Esophagus muscularis mucosa (tissue), 4 donors: ENCODE measurements at regions of chr1 and their contacts with region 1.

Region 1: GRCh38 chr1:202348509-202349205 is at the start of gene PPP1R12B:
- DNase-seq: peak; percentile 99
- H3K4me3 ChIP-seq: peak within 1 kb of the TSS; percentile 83 to 98 (median 93)
- H3K27ac ChIP-seq: peak within 1 kb of the TSS; percentile 89 to 93 (median 92)
- H3K4me1 ChIP-seq: peaks cover 18 to 40% (median 36%) of the 10 kb centered on the region in 4 donors
- H3K27me3 ChIP-seq: no peaks in the 10 kb centered on the region
- CTCF ChIP-seq: no peak
- EP300 ChIP-seq: no peak
- POLR2A ChIP-seq: peak; percentile 18
- total RNA-seq, gene PPP1R12B: 692 to 1,262 (median 949) TPM

Region 2: GRCh38 chr1:202367271-202367670 is 18.6 kb after region 1 on chr1:
- intact Hi-C with region 1: loop called (anchors 2 kb)
- DNase-seq: no peak
- H3K4me3 ChIP-seq: no peak overlapping the region
- H3K27ac ChIP-seq: no peak overlapping the region
- H3K4me1 ChIP-seq: peaks cover 3 to 20% (median 17%) of the 10 kb centered on the region in 4 donors
- H3K27me3 ChIP-seq: no peaks in the 10 kb centered on the region
- CTCF ChIP-seq: no peak
- EP300 ChIP-seq: no peak
- POLR2A ChIP-seq: no peak

Region 3: GRCh38 chr1:202416641-202417040 is 68.0 kb after region 1 on chr1:
- intact Hi-C with region 1: loop called (anchors 10 kb)
- DNase-seq: no peak
- H3K4me3 ChIP-seq: no peak overlapping the region
- H3K27ac ChIP-seq: no peak overlapping the region
- H3K4me1 ChIP-seq: peaks cover 18 to 26% (median 23%) of the 10 kb centered on the region in 4 donors
- H3K27me3 ChIP-seq: no peaks in the 10 kb centered on the region
- CTCF ChIP-seq: no peak
- EP300 ChIP-seq: no peak
- POLR2A ChIP-seq: no peak

Region 4: DNA sequence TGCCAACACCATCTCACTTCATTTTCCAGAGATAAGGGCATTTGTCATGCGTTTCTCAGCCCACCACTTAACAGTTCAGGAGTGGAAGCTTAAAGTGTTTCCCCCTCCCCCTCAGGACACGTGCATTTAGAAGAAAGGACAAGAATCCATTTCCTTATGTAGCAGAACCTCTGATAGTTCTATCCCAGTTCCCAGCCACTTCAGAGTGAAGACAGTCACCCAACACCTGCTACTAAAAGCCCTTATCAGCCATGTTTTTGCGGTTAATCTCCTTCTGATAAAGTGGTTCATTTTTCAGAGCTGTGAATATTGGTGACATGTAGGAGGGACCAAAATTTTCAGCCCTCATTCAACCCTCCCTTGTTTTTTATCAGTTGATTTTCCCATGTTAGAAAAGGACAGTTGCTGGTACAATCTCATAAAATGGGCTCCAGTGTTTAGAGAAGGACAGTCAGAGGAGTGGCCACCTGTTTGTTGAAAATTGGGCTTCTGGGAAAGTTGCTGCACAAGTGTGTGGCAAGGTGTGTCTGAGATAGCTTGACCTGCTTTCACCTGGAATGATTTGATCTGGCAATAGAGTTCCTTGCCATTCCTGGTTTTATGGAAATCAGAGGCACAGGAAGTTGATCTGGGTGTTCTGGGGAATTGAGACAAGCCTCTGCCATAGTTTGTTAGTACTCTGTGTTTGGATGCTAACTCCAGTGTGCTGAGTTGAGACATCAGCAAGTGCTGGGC is 113.9 kb after region 1 on chr1:
- intact Hi-C with region 1: loop called (anchors 10 kb)
- DNase-seq: no peak
- H3K4me3 ChIP-seq: no peak overlapping the region
- H3K27ac ChIP-seq: peak overlapping the region in 1 of 4 donors; percentile 21
- H3K4me1 ChIP-seq: peaks cover 15 to 62% (median 46%) of the 10 kb centered on the region in 4 donors
- H3K27me3 ChIP-seq: no peaks in the 10 kb centered on the region
- CTCF ChIP-seq: no peak
- EP300 ChIP-seq: no peak
- POLR2A ChIP-seq: no peak

Region 5: GRCh38 chr1:202625416-202626360 is 277.0 kb after region 1 on chr1:
- intact Hi-C with region 1: loop called (anchors 10 kb)
- DNase-seq: no peak
- H3K4me3 ChIP-seq: no peak overlapping the region
- H3K27ac ChIP-seq: no peak overlapping the region
- H3K4me1 ChIP-seq: peaks cover 18 to 25% (median 21%) of the 10 kb centered on the region in 4 donors
- H3K27me3 ChIP-seq: peaks cover 0 to 21% (median 0%) of the 10 kb centered on the region in 4 donors
- CTCF ChIP-seq: peak; percentile 64 to 85 (median 75)
- EP300 ChIP-seq: no peak
- POLR2A ChIP-seq: no peak

Region 6: GRCh38 chr1:202713110-202713509 is 364.5 kb after region 1 on chr1:
- intact Hi-C with region 1: loop called (anchors 5 kb)
- DNase-seq: no peak
- H3K4me3 ChIP-seq: no peak overlapping the region
- H3K27ac ChIP-seq: no peak overlapping the region
- H3K4me1 ChIP-seq: peaks cover 11 to 18% (median 17%) of the 10 kb centered on the region in 4 donors
- H3K27me3 ChIP-seq: peaks cover 0 to 44% (median 28%) of the 10 kb centered on the region in 4 donors
- CTCF ChIP-seq: no peak
- EP300 ChIP-seq: no peak
- POLR2A ChIP-seq: no peak